MCF 10A (cell line): ENCODE measurements at regions of chr2 and their contacts with region 1.

Region 1: DNA sequence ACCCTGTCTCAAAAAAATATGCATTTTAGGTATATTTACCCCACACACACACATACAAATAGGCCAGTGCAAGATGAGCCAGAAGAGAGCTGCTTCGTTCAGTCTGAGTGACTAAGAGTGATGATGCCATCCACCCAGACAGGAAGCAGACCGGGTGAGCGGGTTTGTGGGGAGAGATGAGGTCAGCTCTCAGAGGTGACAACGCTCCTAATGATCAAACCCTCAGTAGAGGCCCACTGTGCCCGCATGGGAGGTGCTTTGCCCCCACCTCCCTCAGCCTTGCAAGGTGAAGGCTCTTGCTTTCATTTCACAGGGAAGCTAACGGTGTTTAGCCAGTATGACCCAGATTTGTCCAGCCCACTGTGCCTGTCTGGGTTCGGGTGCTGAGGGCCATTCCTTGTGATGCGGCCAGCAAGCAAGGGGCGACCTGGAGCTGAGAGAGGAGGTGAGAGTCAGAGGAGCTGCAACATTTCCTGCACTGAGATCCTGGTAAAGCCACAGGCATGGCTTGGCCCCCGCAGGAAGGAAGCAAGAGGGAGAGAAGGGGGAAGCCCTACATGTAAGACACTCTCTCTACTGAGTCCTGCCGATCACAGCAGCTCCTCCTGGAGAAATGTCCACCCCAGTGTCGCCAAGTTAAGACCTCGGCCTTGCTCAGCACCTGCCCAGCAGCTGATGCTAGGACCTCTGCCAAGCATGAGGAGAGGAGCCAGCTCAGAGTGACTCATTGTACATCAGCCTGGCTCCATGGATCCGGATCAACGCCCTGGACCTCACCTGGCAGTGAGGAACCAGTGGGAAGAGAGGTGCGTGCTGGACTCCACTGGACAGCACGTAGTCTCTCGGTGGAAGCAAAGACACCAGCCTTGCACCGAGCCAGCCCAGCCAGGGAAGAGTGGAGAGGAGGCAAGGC is 37.0 kb downstream of the NIFK start:
- DNase-seq: peak; percentile 90
- H3K4me3 Mint-ChIP-seq: no peak overlapping the region
- H3K27ac Mint-ChIP-seq: peak overlapping the region; percentile 64
- H3K4me1 Mint-ChIP-seq: peaks cover 32% of the 10 kb centered on the region
- H3K27me3 Mint-ChIP-seq: no peaks in the 10 kb centered on the region
- CTCF ChIP-seq: no peak

Region 2: DNA sequence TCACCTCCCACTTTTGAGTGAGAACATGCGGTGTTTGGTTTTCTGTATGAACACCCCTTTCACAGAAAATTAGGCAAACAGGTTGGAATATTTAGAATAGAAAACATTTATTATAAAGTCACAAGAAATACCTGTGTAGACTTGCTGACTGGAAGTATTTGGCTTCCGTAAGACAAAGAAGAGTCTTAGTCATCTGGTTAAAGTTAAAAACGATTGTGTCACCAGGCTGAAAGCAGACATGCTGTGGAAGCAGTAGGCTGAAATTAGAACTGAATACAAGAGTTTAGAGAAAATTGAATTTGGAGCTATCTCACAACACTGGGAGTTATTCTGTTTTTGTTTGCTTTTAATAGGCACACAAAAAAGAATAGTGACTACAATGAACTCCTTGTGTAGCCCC is 34.2 kb before region 1 on chr2:
- CTCF ChIA-PET with region 1: interaction called, 3 read pairs
- POLR2A ChIA-PET with region 1: interaction called, 9 read pairs
- intact Hi-C with region 1: loop called (anchors 5 kb)
- DNase-seq: peak; percentile 69
- H3K4me3 Mint-ChIP-seq: no peak overlapping the region
- H3K27ac Mint-ChIP-seq: peak overlapping the region; percentile 76
- H3K4me1 Mint-ChIP-seq: peaks cover 27% of the 10 kb centered on the region
- H3K27me3 Mint-ChIP-seq: no peaks in the 10 kb centered on the region
- CTCF ChIP-seq: no peak